Ovary (tissue), 10 donors: ENCODE measurements at regions of chr1 and their contacts with region 1.

Region 1: DNA sequence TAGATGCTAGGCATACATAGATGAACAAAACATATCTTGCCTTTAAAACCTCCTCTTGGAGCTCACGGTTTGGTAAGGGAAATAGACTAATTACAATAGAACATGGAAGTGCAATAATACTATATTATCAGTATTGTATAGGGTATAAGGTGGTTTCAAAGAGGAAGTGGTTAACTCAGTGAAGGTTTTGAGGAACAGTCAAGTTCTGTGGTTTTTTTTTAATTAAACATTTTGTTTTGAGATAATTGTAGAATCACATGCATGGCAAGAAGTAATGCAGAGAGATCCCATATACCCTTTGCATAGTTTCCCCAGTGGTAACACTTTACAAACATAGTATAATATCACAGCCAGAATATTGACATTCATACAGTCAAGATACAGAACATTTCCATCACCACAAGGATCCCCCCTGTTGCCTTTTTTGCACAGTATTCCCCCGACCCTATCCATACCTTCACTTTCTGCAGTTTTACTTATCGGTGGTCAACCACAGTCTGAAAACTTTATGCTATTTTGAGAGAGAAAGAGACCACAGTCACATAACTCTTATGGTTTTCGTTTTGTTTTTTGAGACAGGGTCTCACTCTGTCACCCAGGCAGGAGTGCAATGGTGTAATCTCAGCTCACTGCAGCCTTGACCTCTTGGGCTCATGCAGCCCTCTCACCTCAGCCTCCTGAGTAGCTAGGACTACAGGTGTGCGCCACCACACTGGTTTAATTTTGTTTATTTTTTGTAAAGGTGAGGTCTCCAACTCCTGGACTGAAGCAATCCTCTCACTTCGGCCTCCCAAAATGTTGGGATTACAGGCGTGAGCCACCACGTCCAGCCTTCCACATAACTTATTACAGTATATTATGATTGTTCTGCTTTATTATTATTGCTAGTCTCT is 60.5 kb upstream of the KIAA1614 start:
- DNase-seq: no peak
- H3K4me3 ChIP-seq: no peak overlapping the region
- H3K27ac ChIP-seq: no peak overlapping the region
- H3K4me1 ChIP-seq: no peaks in the 10 kb centered on the region
- H3K27me3 ChIP-seq: no peaks in the 10 kb centered on the region
- CTCF ChIP-seq: no peak
- EP300 ChIP-seq: no peak
- POLR2A ChIP-seq: no peak

Region 2: GRCh38 chr1:180533266-180533987 is 318.8 kb before region 1 on chr1:
- intact Hi-C with region 1: loop called in 2 of 4 experiments (anchors 5 to 10 kb)
- DNase-seq: peak; percentile 34 to 69 (median 61)
- H3K4me3 ChIP-seq: no peak overlapping the region
- H3K27ac ChIP-seq: no peak overlapping the region
- H3K4me1 ChIP-seq: no peaks in the 10 kb centered on the region
- H3K27me3 ChIP-seq: no peaks in the 10 kb centered on the region
- CTCF ChIP-seq: peak; percentile 45 to 48 (median 47)
- EP300 ChIP-seq: no peak
- POLR2A ChIP-seq: no peak

Region 3: GRCh38 chr1:180631766-180632325 is 220.4 kb before region 1 on chr1 and contains the start of gene XPR1:
- intact Hi-C with region 1: loop called in 1 of 4 experiments (anchors 10 kb)
- DNase-seq: peak; percentile 97 to 99 (median 98)
- H3K4me3 ChIP-seq: peak within 1 kb of the TSS; percentile 50
- H3K27ac ChIP-seq: peak within 1 kb of the TSS; percentile 66 to 82
- H3K4me1 ChIP-seq: peaks cover 3% of the 10 kb centered on the region
- H3K27me3 ChIP-seq: no peaks in the 10 kb centered on the region
- CTCF ChIP-seq: peak in 2 of 3 donors; percentile 29 to 41
- EP300 ChIP-seq: no peak
- POLR2A ChIP-seq: peak; percentile 93
- total RNA-seq, gene XPR1: 15.0 to 34.1 (median 18.1) TPM